Sigmoid colon (tissue), 7 donors: ENCODE measurements at regions of chr10 and their contacts with region 1.

Region 1: GRCh38 chr10:29443745-29444523 is 155.1 kb downstream of the LYZL1 start:
- DNase-seq: no peak
- H3K4me3 ChIP-seq: no peak overlapping the region
- H3K27ac ChIP-seq: no peak overlapping the region
- H3K4me1 ChIP-seq: peaks cover 0 to 18% (median 12%) of the 10 kb centered on the region in 4 donors
- H3K27me3 ChIP-seq: no peaks in the 10 kb centered on the region
- CTCF ChIP-seq: no peak
- EP300 ChIP-seq: no peak
- POLR2A ChIP-seq: no peak

Region 2: DNA sequence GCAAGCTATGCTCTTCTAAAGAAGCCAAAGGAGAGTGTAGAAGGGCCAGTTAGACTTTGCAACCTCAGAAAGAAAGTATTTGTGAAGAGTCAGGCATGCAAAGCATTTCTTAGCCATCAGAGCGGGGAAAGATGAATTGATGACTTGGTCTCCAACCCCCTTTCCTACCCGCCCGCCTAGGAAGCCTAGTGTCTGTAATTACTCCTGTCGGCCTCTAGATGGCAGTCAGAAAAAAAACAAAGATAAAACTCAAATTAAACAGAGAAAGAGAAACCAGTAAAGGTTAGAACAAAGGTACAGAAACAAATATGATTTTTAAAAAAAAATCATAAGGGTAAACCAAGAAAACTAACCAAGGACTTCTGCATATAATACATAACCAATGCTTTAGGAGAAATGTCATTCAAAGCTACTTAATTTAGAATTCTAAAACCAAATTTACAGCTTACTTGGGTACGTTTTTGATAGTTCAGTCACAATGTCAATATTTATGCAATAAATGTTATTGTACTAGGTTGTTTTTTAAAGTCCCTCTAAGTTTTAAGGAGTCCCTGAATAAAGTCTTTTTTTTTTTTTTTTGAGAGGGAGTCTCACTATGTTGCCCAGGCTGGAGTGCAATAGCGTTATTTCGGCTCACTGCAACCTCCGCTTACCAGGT is 57.5 kb before region 1 on chr10:
- intact Hi-C with region 1: loop called (anchors 2 kb)
- DNase-seq: no peak
- H3K4me3 ChIP-seq: no peak overlapping the region
- H3K27ac ChIP-seq: no peak overlapping the region
- H3K4me1 ChIP-seq: no peaks in the 10 kb centered on the region
- H3K27me3 ChIP-seq: no peaks in the 10 kb centered on the region
- CTCF ChIP-seq: peak; percentile 48 to 77 (median 67)
- EP300 ChIP-seq: no peak
- POLR2A ChIP-seq: no peak

Region 3: DNA sequence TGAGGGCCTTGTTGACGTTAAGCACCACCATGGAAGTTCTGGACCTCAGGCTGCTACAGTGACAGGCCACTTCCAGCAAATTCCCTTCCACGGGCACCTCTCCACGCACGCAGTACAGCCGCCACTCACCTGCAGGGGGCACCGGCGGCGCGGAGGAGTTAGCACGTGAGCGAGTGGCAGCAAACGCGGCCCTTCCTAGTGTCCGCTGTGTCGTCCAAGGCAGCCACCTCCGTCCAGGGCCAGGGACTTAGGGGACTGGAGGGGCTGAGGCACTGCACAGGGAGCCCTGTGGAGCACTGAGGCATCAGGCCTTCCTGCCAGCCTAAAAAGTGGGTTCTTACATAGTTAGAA is 26.4 kb after region 1 on chr10:
- intact Hi-C with region 1: no loop called
- DNase-seq: no peak
- H3K4me3 ChIP-seq: no peak overlapping the region
- H3K27ac ChIP-seq: peak overlapping the region; percentile 44 to 79 (median 70)
- H3K4me1 ChIP-seq: peaks cover 0 to 63% (median 57%) of the 10 kb centered on the region in 4 donors
- H3K27me3 ChIP-seq: no peaks in the 10 kb centered on the region
- CTCF ChIP-seq: peak in 2 of 4 experiments; percentile 46 to 54
- EP300 ChIP-seq: no peak
- POLR2A ChIP-seq: no peak